PC-3 (cell line): ENCODE measurements at regions of chr20 and their contacts with region 1.

Region 1: GRCh38 chr20:59751056-59751688 is 146.8 kb downstream of the PHACTR3 start:
- DNase-seq: peak; percentile 73
- ATAC-seq: peak; percentile 94
- H3K4me3 ChIP-seq: no peak overlapping the region
- H3K27ac ChIP-seq: no peak overlapping the region
- H3K4me1 ChIP-seq: no peaks in the 10 kb centered on the region
- H3K27me3 ChIP-seq: peaks cover 96% of the 10 kb centered on the region
- CTCF ChIP-seq: peak; percentile 91

Region 2: GRCh38 chr20:59598625-59599310 is 152.4 kb before region 1 on chr20:
- CTCF ChIA-PET with region 1: no interaction called
- POLR2A ChIA-PET with region 1: interaction called, 4 read pairs
- intact Hi-C with region 1: loop called (anchors 1 kb)
- DNase-seq: peak; percentile 50
- ATAC-seq: peak; percentile 89
- H3K4me3 ChIP-seq: no peak overlapping the region
- H3K27ac ChIP-seq: no peak overlapping the region
- H3K4me1 ChIP-seq: no peaks in the 10 kb centered on the region
- H3K27me3 ChIP-seq: peaks cover 71% of the 10 kb centered on the region
- CTCF ChIP-seq: peak; percentile 93